Ascending aorta (tissue), 2 donors: ENCODE measurements at regions of chr17 and their contacts with region 1.

Region 1: DNA sequence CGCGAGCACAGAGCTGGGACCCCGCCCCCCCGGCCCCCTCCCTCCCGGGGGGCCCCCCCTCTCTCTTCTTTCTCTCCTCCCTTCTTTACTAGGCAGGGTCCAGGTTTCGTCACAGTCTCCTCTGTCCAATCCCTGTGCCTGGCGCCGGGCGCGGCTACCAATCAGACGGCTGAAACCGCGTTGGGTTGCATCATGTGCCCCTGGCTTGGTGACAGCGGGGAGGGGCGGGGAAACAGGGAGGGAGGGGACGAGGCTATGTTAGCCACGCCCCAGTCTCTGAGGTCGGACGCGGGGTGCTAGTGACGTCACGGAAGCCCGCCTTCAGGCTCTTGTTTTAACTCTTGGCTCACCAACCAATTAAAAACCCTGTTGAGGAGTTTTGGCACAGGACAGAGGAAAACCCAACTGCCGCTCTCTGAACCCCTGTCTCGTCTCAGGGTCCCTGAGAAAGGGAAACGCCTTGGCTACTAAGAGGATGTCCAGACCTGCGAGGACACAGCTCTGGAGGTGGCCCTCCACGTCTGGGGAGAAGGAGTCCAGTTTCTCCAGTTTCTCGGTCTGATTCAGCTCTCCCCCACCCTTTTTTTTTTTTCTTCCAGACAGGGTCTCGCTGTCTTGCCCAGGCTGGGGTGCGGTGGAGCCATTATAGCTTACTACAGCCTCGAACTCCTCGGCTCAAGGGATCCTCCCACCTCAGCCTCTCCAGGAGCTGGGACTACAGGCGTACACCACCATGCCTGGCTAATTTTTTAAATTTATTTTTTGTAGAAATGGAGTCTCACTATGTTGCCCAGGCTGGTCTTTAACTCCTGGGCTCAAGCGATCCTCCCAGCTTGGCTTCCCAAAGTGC is 439 bp upstream of the PLEKHH3 start:
- DNase-seq: peak; percentile 99 to 100
- H3K4me3 ChIP-seq: peak overlapping the region; percentile 77 to 94
- H3K27ac ChIP-seq: peak overlapping the region; percentile 94 to 95
- H3K4me1 ChIP-seq: peaks cover 36 to 52% of the 10 kb centered on the region in 2 donors
- H3K27me3 ChIP-seq: no peaks in the 10 kb centered on the region
- CTCF ChIP-seq: no peak

Region 2: GRCh38 chr17:42422958-42423712 is 254.1 kb before region 1 on chr17 and contains the start of gene CAVIN1:
- intact Hi-C with region 1: loop called (anchors 2 kb)
- DNase-seq: peak; percentile 85 to 99
- H3K4me3 ChIP-seq: peak within 1 kb of the TSS; percentile 92 to 100
- H3K27ac ChIP-seq: peak within 1 kb of the TSS; percentile 99 to 100
- H3K4me1 ChIP-seq: peaks cover 10 to 32% of the 10 kb centered on the region in 2 donors
- H3K27me3 ChIP-seq: no peaks in the 10 kb centered on the region
- CTCF ChIP-seq: no peak
- total RNA-seq, gene CAVIN1: 548 TPM

Region 3: DNA sequence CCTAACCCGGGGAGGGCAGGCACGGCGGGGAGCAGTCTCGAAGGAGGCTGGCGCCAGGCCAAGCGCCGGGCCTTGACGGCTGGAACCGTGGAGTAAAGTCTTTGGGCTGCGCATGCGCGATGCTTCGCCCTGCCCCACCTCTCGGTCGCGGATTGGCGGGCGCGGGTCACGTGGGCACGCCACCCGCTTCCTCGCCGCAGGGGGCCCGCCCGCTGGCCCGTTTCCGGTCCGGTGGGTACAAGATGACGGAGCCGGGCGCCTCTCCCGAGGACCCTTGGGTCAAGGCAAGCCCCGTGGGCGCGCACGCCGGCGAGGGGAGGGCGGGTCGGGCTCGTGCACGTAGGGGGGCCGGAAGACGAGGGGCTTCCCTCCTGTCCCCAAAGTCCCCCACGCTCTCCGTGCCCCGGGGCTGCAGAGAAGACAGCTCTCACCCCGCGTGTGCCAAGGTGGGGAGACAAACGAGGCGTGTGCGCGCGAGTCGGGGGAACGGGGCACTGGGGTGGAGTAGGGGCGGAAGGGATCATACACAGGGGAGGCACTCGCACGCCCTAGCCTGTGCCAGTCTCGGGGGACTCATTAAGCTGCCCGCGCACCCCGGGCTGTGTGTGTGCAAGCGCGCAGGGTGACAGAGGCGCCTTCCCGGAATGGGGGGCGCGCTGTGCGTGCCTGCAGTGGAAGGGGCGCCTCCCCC is 110.2 kb before region 1 on chr17 and contains the start of gene MLX:
- intact Hi-C with region 1: loop called (anchors 5 kb)
- DNase-seq: peak; percentile 71 to 97
- H3K4me3 ChIP-seq: peak within 1 kb of the TSS; percentile 70 to 82
- H3K27ac ChIP-seq: peak within 1 kb of the TSS; percentile 89 to 97
- H3K4me1 ChIP-seq: peaks cover 5 to 31% of the 10 kb centered on the region in 2 donors
- H3K27me3 ChIP-seq: no peaks in the 10 kb centered on the region
- CTCF ChIP-seq: no peak
- total RNA-seq, gene MLX: 15.8 TPM

Region 4: GRCh38 chr17:42609182-42609813 is 67.9 kb before region 1 on chr17 and contains the starts of genes RETREG3 and TUBG1:
- intact Hi-C with region 1: loop called (anchors 1 kb)
- DNase-seq: peak; percentile 95 to 99
- H3K4me3 ChIP-seq: peak within 1 kb of the TSS; percentile 76 to 79
- H3K27ac ChIP-seq: peak within 1 kb of the TSS; percentile 89 to 92
- H3K4me1 ChIP-seq: peaks cover 6 to 29% of the 10 kb centered on the region in 2 donors
- H3K27me3 ChIP-seq: no peaks in the 10 kb centered on the region
- CTCF ChIP-seq: peak; percentile 41 to 55 (median 42)
- total RNA-seq, gene RETREG3: 51.3 TPM
- total RNA-seq, gene TUBG1: 10.5 TPM

Region 5: DNA sequence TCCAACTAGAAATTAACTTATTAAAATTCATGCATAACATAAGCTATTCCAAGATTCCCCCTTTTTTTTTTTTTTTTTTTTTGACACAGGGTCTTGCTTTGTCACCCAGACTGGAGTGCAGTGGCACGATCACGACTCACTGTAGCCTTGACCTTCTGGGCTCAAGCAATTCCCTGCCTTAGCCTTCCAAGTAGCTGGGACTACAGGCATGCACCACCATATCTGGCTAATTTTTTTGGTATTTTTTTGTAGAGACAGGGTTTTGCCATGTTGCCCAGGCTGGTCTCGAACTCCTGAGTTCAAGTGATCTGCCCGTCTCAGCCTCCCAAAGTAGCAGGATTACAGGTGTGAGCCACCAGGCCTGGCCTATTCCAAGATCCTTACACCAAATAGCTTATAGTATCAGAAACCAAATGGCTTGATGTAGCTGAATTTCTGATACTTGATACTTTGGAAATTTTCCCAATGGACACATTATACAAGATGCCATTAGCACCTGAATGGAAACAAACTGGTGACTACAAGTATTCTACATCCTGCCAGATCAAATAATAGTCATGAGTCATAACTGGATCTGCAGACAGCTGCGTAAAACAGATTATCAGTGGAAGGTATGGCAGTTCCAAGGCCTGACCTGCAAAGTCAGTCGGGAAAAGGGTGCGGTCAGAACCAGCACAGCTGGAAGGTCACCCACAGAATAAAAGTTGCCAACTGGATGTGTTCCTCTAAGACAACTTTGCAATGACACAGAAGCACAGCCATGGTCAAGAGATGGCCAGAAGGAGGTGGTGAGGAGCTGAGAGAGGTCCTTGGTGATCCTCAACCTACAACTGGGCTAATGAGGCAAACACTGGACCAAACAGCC is 53.3 kb before region 1 on chr17:
- intact Hi-C with region 1: no loop called
- DNase-seq: no peak
- H3K4me3 ChIP-seq: no peak overlapping the region
- H3K27ac ChIP-seq: no peak overlapping the region
- H3K4me1 ChIP-seq: no peaks in the 10 kb centered on the region
- H3K27me3 ChIP-seq: no peaks in the 10 kb centered on the region
- CTCF ChIP-seq: no peak

Region 6: GRCh38 chr17:42819944-42820535 is 142.8 kb after region 1 on chr17:
- intact Hi-C with region 1: loop called (anchors 5 kb)
- DNase-seq: no peak
- H3K4me3 ChIP-seq: no peak overlapping the region
- H3K27ac ChIP-seq: no peak overlapping the region
- H3K4me1 ChIP-seq: peaks cover 6 to 12% of the 10 kb centered on the region in 2 donors
- H3K27me3 ChIP-seq: no peaks in the 10 kb centered on the region
- CTCF ChIP-seq: peak in 2 of 3 experiments; percentile 49 to 58